B cell (primary cell): ENCODE measurements at regions of chr6 and their contacts with region 1.

Region 1: DNA sequence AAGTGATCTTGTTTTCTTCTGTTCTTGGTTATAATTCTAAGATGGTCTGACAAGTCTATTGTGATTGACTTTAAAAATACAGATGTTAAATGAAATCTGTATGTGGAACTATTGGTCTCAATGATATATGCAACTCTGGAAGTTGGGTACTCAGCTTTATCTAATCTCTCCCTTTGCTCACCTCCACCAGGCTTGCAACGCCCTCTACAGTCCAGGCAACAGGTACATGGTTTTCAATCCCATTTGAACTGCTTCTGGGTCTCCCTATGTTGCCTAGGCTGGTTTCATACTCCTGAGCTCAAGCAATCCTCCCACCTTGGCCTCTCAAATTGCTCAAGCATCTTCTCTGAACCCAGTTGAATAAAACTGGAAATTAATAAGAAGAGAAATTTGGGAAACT is 25.6 kb upstream of the HLA-DQB1 start:
- DNase-seq: peak; percentile 85
- ATAC-seq: peak; percentile 60
- H3K4me3 ChIP-seq: no peak overlapping the region
- H3K4me3 Mint-ChIP-seq: peak overlapping the region; percentile 53
- H3K27ac ChIP-seq: peak overlapping the region; percentile 68 to 95
- H3K27ac Mint-ChIP-seq: peak overlapping the region; percentile 85
- H3K4me1 ChIP-seq: peaks cover 27 to 28% of the 10 kb centered on the region in 2 donors
- H3K4me1 Mint-ChIP-seq: peaks cover 33% of the 10 kb centered on the region
- H3K27me3 ChIP-seq: no peaks in the 10 kb centered on the region
- H3K27me3 Mint-ChIP-seq: no peaks in the 10 kb centered on the region
- CTCF ChIP-seq: peak; percentile 42

Region 2: GRCh38 chr6:32432050-32432450 is 260.0 kb before region 1 on chr6:
- CTCF ChIA-PET with region 1: interaction called, 77 read pairs
- POLR2A ChIA-PET with region 1: interaction called, 4 read pairs
- intact Hi-C with region 1: loop called (anchors 2 kb)
- DNase-seq: peak; percentile 78
- ATAC-seq: peak; percentile 38
- H3K4me3 ChIP-seq: no peak overlapping the region
- H3K4me3 Mint-ChIP-seq: no peak overlapping the region
- H3K27ac ChIP-seq: no peak overlapping the region
- H3K27ac Mint-ChIP-seq: peak overlapping the region; percentile 63
- H3K4me1 ChIP-seq: peaks cover 21 to 27% of the 10 kb centered on the region in 2 donors
- H3K4me1 Mint-ChIP-seq: peaks cover 32% of the 10 kb centered on the region
- H3K27me3 ChIP-seq: no peaks in the 10 kb centered on the region
- H3K27me3 Mint-ChIP-seq: no peaks in the 10 kb centered on the region
- CTCF ChIP-seq: peak; percentile 83

Region 3: GRCh38 chr6:32738126-32738525 is 46.1 kb after region 1 on chr6:
- CTCF ChIA-PET with region 1: no interaction called
- POLR2A ChIA-PET with region 1: no interaction called
- intact Hi-C with region 1: no loop called
- DNase-seq: no peak
- ATAC-seq: no peak
- H3K4me3 ChIP-seq: no peak overlapping the region
- H3K4me3 Mint-ChIP-seq: no peak overlapping the region
- H3K27ac ChIP-seq: no peak overlapping the region
- H3K27ac Mint-ChIP-seq: no peak overlapping the region
- H3K4me1 ChIP-seq: no peaks in the 10 kb centered on the region
- H3K4me1 Mint-ChIP-seq: no peaks in the 10 kb centered on the region
- H3K27me3 ChIP-seq: peaks cover 0 to 12% (median 1%) of the 10 kb centered on the region in 4 experiments
- H3K27me3 Mint-ChIP-seq: peaks cover 25% of the 10 kb centered on the region
- CTCF ChIP-seq: no peak